IMR-90 (cell line): ENCODE measurements at regions of chr4 and their contacts with region 1.

Region 1: DNA sequence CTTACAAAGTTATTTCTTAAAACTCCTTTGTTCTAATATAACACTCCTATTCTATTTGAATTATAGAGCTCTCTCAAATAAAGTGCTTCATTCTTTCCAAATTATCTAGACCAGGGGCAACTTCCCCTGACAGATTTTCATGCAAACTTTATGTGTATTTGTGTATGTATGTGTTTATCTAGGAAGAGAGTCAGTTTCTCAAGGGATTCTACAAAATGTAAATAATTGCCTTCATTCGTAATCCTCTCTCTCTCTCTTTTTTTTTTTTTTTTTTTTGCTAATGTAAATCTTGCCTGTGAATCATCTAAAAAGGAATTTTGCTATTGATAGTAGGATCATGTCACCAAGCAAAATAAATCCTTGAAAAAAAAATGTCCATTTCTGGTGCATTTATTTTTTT is 38.9 kb upstream of the RBPJ start:
- DNase-seq: peak; percentile 83
- ATAC-seq: peak; percentile 79
- H3K4me3 ChIP-seq: no peak overlapping the region
- H3K27ac ChIP-seq: peak overlapping the region; percentile 79; the same call in 1 of the 2 replicates
- H3K4me1 ChIP-seq: peaks cover 5% of the 10 kb centered on the region
- H3K27me3 ChIP-seq: no peaks in the 10 kb centered on the region
- CTCF ChIP-seq: no peak
- POLR2A ChIP-seq: no peak
- RAD21 ChIP-seq: no peak

Region 2: GRCh38 chr4:26242451-26242850 is 39.4 kb before region 1 on chr4:
- CTCF ChIA-PET with region 1: no interaction called
- POLR2A ChIA-PET with region 1: no interaction called
- dilution Hi-C with region 1: no loop called
- in situ Hi-C with region 1: no loop called
- intact Hi-C with region 1: loop called (anchors 5 kb)
- DNase-seq: peak; percentile 40
- ATAC-seq: no peak
- H3K4me3 ChIP-seq: no peak overlapping the region
- H3K27ac ChIP-seq: no peak overlapping the region
- H3K4me1 ChIP-seq: peaks cover 13% of the 10 kb centered on the region
- H3K27me3 ChIP-seq: no peaks in the 10 kb centered on the region
- CTCF ChIP-seq: no peak
- POLR2A ChIP-seq: no peak
- RAD21 ChIP-seq: no peak

Region 3: GRCh38 chr4:26372525-26373172 is 90.8 kb after region 1 on chr4:
- CTCF ChIA-PET with region 1: no interaction called
- POLR2A ChIA-PET with region 1: no interaction called
- dilution Hi-C with region 1: no loop called
- in situ Hi-C with region 1: no loop called
- intact Hi-C with region 1: no loop called
- DNase-seq: peak; percentile 77
- ATAC-seq: peak; percentile 59
- H3K4me3 ChIP-seq: no peak overlapping the region
- H3K27ac ChIP-seq: peak overlapping the region; percentile 11; the same call in 1 of the 2 replicates
- H3K4me1 ChIP-seq: peaks cover 20% of the 10 kb centered on the region
- H3K27me3 ChIP-seq: no peaks in the 10 kb centered on the region
- CTCF ChIP-seq: no peak
- POLR2A ChIP-seq: no peak
- RAD21 ChIP-seq: no peak